GM10248 (cell line): ENCODE measurements at regions of chr6 and their contacts with region 1.

Region 1: GRCh38 chr6:28104392-28105244 is 19.8 kb upstream of the ZSCAN16 start:
- DNase-seq: peak; percentile 92
- CTCF ChIP-seq: peak; percentile 50

Region 2: GRCh38 chr6:27743818-27744217 is 360.8 kb before region 1 on chr6:
- CTCF ChIA-PET with region 1: no interaction called
- POLR2A ChIA-PET with region 1: no interaction called
- DNase-seq: no peak
- CTCF ChIP-seq: no peak

Region 3: GRCh38 chr6:28090917-28091586 is 13.6 kb before region 1 on chr6:
- CTCF ChIA-PET with region 1: interaction called, 10 read pairs
- POLR2A ChIA-PET with region 1: no interaction called
- DNase-seq: no peak
- CTCF ChIP-seq: no peak

Region 4: DNA sequence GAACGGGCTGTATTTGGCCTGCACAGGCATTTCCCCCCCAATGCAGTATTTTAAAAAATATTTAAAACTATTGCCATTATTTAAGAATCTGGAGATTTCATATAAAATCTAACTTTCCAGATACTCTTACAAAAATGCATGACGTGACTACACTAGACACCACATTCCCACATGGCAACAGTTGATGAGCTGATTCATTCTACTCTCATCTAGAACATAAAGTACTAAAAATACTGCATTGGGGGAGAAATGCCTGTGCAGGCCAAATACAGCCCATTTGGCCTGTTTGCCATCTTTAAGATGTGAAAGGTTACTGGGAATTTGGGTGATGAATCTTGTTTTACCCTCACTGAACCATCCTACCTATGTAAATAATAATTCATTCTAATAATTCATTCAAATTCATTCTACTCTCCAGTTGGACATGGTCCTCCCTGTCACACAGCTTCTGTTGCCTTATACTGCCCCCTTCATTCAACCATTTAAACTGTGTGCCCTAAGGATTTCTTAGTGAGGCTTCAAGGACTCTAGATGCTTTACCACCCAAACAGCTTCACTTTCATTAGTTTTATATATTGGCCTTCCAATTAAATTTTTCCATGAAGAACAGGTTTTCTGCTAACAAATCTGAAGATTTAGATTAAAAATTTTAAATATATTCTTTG is 12.9 kb after region 1 on chr6:
- CTCF ChIA-PET with region 1: interaction called, 20 read pairs
- POLR2A ChIA-PET with region 1: no interaction called
- DNase-seq: no peak
- CTCF ChIP-seq: no peak

Region 5: GRCh38 chr6:28124102-28124970 is 19.7 kb after region 1 on chr6 and contains the start of gene ZSCAN16:
- CTCF ChIA-PET with region 1: interaction called, 10 read pairs
- POLR2A ChIA-PET with region 1: interaction called, 3 read pairs
- DNase-seq: peak; percentile 81
- CTCF ChIP-seq: no peak